Mammary epithelial cell (primary cell): ENCODE measurements at regions of chr19 and their contacts with region 1.

Region 1: DNA sequence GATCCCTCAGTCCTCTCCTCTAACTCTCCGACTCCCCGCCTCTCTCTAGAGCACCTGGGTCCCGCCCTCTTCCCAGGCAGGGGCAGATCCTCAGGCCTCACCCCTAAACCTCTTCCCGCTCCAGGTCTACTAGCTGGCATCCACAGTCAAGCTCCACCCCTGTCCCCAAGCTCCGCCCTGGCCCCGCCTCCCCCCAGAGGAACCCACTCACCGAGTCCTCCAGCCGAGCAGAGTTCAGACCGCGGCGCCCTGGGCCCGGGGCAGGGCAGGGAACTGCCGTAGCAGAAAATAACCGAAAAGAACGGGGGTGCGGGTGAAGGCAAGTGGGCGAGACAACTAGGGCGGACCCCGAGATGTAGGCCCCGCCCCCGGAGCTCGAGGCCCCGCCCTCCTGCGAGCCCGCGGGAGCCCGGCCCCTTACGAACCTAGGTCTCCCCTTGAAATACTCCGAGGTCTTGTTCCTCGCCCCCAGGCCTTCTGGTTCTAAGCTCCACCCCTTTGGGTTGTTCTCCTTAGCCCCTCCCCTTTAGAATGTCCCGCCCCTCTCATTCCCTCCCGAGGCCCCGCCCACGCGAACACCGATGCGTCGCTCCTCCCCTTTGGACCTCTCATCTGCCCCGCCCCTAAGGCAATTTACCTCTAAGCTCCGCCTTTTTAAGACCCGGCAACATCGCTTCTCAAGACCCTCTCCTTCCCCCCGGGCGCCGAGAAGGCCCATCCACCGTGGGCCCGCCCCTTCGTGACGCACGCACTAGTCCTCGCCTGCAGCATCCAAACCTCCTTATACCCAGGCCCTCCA is at the start of gene GGN:
- DNase-seq: peak; percentile 87
- H3K4me3 ChIP-seq: peak within 1 kb of the TSS; percentile 38 to 57 (median 50)
- H3K27ac ChIP-seq: no peak within 1 kb of the TSS
- H3K4me1 ChIP-seq: peaks cover 24% of the 10 kb centered on the region
- H3K27me3 ChIP-seq: no peaks in the 10 kb centered on the region
- CTCF ChIP-seq: no peak
- total RNA-seq, gene GGN: 0.17 to 0.68 TPM

Region 2: GRCh38 chr19:38245826-38246498 is 141.8 kb before region 1 on chr19:
- CTCF ChIA-PET with region 1: interaction called, 11 read pairs
- dilution Hi-C with region 1: no loop called
- in situ Hi-C with region 1: no loop called
- intact Hi-C with region 1: loop called (anchors 2 kb)
- DNase-seq: no peak
- H3K4me3 ChIP-seq: no peak overlapping the region
- H3K27ac ChIP-seq: no peak overlapping the region
- H3K4me1 ChIP-seq: peaks cover 2% of the 10 kb centered on the region
- H3K27me3 ChIP-seq: no peaks in the 10 kb centered on the region
- CTCF ChIP-seq: no peak

Region 3: GRCh38 chr19:38361633-38362075 is 26.1 kb before region 1 on chr19:
- CTCF ChIA-PET with region 1: no interaction called
- dilution Hi-C with region 1: no loop called
- in situ Hi-C with region 1: no loop called
- intact Hi-C with region 1: loop called (anchors 2 kb)
- DNase-seq: peak; percentile 81
- H3K4me3 ChIP-seq: peak overlapping the region; percentile 53 to 76 (median 59)
- H3K27ac ChIP-seq: no peak overlapping the region
- H3K4me1 ChIP-seq: peaks cover 8% of the 10 kb centered on the region
- H3K27me3 ChIP-seq: peaks cover 12% of the 10 kb centered on the region
- CTCF ChIP-seq: no peak

Region 4: DNA sequence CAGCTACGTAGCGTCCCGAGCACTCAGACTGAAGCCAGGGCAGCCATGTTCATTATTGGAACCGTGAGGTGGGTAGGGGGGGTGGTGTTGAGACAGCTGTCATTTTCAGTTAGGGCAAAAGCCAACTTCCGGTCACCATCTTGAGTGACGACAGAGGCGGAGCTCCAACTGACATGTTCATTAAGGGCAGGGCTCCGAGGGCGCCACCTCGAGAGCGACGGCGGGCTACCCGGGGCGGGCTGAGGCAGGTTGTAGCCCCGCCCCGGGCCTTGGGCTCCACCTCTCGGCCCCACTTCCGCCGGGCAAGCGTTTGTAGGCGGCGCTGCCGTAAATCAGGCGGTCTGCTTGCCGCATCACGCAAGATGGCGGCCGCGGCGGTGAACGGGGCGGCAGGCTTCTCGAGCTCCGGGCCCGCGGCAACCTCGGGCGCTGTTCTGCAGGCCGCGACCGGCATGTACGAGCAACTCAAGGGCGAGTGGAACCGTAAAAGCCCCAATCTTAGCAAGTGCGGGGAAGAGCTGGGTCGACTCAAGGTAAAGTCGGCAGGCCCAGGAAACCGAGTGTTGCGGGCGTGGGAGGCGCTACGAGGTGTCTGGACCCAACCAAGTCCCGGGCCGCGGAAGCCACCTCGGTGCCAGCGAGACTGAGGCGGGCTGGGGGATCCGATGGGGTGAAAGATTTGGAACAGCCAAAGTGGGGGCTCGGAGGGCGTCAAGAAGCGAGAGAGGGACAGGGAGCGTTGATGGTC is 13.1 kb before region 1 on chr19 and contains the start of gene PSMD8:
- CTCF ChIA-PET with region 1: no interaction called
- dilution Hi-C with region 1: no loop called
- in situ Hi-C with region 1: no loop called
- intact Hi-C with region 1: loop called (anchors 1 kb)
- DNase-seq: peak; percentile 99
- H3K4me3 ChIP-seq: peak within 1 kb of the TSS; percentile 79 to 94 (median 93)
- H3K27ac ChIP-seq: peak within 1 kb of the TSS; percentile 83
- H3K4me1 ChIP-seq: peaks cover 14% of the 10 kb centered on the region
- H3K27me3 ChIP-seq: no peaks in the 10 kb centered on the region
- CTCF ChIP-seq: peak in 1 of 2 donors; percentile 33
- total RNA-seq, gene PSMD8: 247 to 401 TPM

Region 5: DNA sequence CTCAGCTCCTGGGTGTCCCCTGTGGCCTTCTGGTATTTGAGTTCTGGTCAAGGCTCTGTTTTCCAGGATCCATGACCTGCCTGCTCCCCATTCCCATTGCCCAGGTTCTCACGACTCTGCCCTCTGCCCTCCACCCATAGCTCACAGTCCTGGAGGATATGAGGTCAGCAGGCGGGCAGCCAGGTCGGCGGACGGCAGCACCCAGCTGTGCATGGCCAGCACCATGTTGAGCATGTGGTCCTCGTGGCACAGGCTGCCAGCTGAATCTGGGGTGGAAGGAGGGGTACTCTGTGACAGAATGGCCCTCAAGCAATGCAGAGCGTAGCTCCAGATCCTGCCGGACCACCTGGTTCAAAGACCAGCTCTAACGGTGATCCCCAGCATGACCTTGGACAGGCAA is 33.2 kb after region 1 on chr19:
- CTCF ChIA-PET with region 1: no interaction called
- dilution Hi-C with region 1: loop called (anchors 5 kb)
- in situ Hi-C with region 1: no loop called
- intact Hi-C with region 1: no loop called
- DNase-seq: no peak
- H3K4me3 ChIP-seq: no peak overlapping the region
- H3K27ac ChIP-seq: no peak overlapping the region
- H3K4me1 ChIP-seq: peaks cover 10% of the 10 kb centered on the region
- H3K27me3 ChIP-seq: peaks cover 1% of the 10 kb centered on the region
- CTCF ChIP-seq: no peak